ENCODE measurements at regions of chr6 and their contacts with region 1.

Region 1: DNA sequence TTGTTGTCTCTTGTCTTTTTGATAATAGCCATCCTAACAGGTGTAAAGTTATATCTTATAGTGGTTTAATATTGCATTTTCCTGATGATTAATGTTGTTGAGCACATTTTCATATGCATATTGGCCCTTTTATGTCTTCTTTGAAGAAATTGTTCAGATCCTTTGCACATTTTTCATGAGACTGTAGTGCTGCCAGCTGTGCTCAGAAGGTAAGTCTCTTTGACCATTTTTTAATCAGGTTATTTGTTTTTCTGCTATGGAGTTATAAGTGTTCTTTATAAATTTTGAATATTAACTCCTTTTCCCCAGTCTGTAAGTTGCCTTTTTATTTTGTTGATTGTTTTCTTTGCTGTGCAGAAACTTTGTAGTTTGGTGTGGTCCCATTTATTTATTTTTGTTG is 55.8 kb upstream of the ZNF184 start:
- DNase-seq: no peak
- ATAC-seq: no peak
- H3K4me3 ChIP-seq: no peak overlapping the region
- H3K27ac ChIP-seq: no peak overlapping the region
- H3K4me1 ChIP-seq: no peaks in the 10 kb centered on the region
- H3K27me3 ChIP-seq: peaks cover 5% of the 10 kb centered on the region

Region 2: GRCh38 chr6:27748662-27749244 is 220.0 kb after region 1 on chr6:
- intact Hi-C with region 1: loop called in 1 of 4 experiments (anchors 5 kb)
- DNase-seq: no peak
- ATAC-seq: no peak
- H3K4me3 ChIP-seq: no peak overlapping the region
- H3K27ac ChIP-seq: no peak overlapping the region
- H3K4me1 ChIP-seq: no peaks in the 10 kb centered on the region
- H3K27me3 ChIP-seq: no peaks in the 10 kb centered on the region

Measured in right cardiac atrium (tissue), 5 donors.